T-cell (primary cell): ENCODE measurements at regions of chr17 and their contacts with region 1.

Region 1: DNA sequence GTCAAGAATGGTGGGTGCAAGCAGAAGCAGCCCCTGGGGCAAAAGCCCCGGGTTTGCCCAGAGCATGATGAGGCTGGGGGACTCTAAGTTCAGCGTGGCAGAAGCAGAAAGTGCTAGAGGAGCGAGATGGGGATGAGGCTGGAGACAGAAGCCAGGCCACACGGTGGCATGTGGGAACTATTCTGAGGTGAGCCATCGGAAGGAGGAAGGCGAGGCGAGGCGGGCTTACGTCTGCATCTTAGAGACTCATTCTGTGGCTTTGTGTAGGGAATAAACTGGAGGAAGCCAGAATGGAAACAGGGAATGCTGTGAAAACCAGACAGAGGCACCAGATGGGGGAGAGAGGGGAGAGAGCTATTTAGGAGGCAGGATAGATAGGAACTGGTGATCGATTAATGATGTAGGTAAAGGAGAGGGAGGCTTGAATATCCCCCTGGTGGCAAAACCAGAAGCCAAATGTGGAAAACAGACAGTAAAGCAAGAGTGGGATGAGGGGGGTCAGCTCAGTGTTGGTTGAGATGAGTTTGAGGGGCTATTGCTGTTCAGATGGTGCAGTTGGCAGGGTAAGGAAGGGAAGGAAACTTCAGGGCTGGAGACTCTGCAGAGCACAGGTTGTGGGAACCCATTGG is 3.1 kb upstream of the TNFSF13 start:
- DNase-seq: no peak
- ATAC-seq: no peak
- H3K4me3 ChIP-seq: no peak overlapping the region
- H3K4me3 Mint-ChIP-seq: peak overlapping the region in 1 of 3 donors; percentile 22
- H3K27ac ChIP-seq: peak overlapping the region; percentile 45
- H3K27ac Mint-ChIP-seq: peak overlapping the region; percentile 58 to 83
- H3K4me1 ChIP-seq: peaks cover 25 to 74% of the 10 kb centered on the region in 2 experiments
- H3K4me1 Mint-ChIP-seq: peaks cover 58 to 89% (median 73%) of the 10 kb centered on the region in 3 donors
- H3K27me3 ChIP-seq: no peaks in the 10 kb centered on the region
- H3K27me3 Mint-ChIP-seq: no peaks in the 10 kb centered on the region

Region 2: DNA sequence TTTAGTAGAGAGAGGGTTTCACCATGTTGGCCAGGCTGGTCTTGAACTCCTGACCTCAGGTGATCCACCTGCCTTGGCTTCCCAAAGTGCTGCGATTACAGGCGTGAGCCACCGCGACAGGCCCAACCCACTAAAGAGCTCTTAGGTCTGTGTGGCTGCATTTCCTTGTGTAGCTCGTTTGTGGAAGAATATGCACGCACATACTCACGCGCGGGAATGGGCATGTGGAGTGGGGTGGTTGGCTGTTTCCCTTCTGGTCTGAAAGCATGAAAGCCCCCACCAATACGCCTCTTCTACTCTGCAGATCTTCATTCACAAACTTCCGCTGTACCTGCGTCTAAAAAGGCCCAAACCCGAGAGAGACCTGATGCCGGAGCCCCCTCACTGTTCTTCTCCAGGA is 100.5 kb before region 1 on chr17:
- CTCF ChIA-PET with region 1: no interaction called
- POLR2A ChIA-PET with region 1: no interaction called
- DNase-seq: peak in 1 of 35 experiments; percentile 49
- ATAC-seq: peak in 2 of 4 experiments; percentile 36 to 44
- H3K4me3 ChIP-seq: peak overlapping the region; percentile 95 to 99
- H3K4me3 Mint-ChIP-seq: peak overlapping the region; percentile 90 to 97 (median 94)
- H3K27ac ChIP-seq: peak overlapping the region; percentile 74
- H3K27ac Mint-ChIP-seq: peak overlapping the region; percentile 90 to 97
- H3K4me1 ChIP-seq: peaks cover 0 to 21% of the 10 kb centered on the region in 2 experiments
- H3K4me1 Mint-ChIP-seq: peaks cover 22 to 30% (median 26%) of the 10 kb centered on the region in 3 donors
- H3K27me3 ChIP-seq: no peaks in the 10 kb centered on the region
- H3K27me3 Mint-ChIP-seq: no peaks in the 10 kb centered on the region

Region 3: DNA sequence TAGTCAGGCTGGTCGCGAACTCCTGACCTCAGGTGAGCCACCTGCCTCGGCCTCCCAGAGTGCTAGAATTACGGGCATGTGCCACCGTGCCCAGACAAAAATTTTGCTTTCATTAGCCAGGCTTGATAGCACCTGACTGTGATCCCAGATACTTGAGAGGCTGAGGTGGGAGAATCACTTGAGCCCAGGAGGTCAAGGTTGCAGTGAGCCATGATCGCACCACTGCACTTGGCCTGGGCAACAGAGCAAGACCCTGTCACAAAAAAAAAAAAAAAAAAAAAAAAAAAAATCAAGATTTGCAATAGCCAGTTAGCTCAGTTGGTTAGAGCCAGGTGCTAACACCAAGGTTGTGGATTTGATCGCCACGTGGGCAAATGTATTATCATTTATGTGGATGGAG is 65.4 kb after region 1 on chr17:
- CTCF ChIA-PET with region 1: interaction called, 3 to 10 read pairs
- POLR2A ChIA-PET with region 1: no interaction called
- DNase-seq: no peak
- ATAC-seq: no peak
- H3K4me3 ChIP-seq: no peak overlapping the region
- H3K4me3 Mint-ChIP-seq: no peak overlapping the region
- H3K27ac ChIP-seq: no peak overlapping the region
- H3K27ac Mint-ChIP-seq: no peak overlapping the region
- H3K4me1 ChIP-seq: no peaks in the 10 kb centered on the region
- H3K4me1 Mint-ChIP-seq: no peaks in the 10 kb centered on the region
- H3K27me3 ChIP-seq: no peaks in the 10 kb centered on the region
- H3K27me3 Mint-ChIP-seq: no peaks in the 10 kb centered on the region